WTC11 (cell line): ENCODE measurements at regions of chr1 and their contacts with region 1.

Region 1: DNA sequence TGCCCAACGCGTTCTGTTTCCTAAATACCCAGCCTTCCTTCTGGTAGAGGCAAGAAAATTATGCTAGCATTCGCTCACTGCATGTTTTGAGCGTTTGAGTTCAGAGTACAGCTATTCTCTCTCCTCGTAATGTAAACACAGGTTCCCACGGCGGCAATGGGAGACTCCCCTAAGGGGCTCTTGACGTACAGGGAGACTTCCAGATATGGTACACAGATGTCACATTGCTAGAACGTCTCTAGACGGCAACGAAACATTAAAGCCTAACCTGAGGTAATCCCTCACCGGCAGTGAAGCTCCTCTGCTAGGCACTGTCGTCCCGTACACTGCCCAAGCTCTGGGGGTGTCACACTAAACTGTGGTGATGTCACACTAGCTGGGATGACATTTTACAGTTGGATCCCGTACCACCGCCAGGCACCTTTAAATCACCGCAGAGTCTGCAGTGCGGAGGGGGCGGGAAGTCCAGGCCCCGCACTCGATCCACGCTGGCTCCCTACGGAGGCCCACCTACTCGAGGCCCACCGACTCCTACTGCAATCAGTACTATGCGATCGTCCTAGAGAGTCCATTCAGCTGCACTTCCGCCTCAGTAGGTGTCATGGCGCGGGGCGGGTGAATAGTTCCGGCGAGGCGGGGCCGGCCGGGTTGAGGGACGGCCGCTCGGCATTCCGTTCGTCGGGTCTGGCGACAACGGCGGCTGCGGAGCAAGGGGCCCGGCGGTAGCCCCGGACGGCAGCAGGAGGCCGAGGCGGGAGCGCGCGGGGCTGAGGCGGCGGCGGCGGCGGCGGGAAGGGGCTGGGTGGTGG is at the start of gene HIPK1:
- DNase-seq: peak; percentile 94
- ATAC-seq: peak; percentile 86
- H3K4me3 Mint-ChIP-seq: peak within 1 kb of the TSS; percentile 93
- H3K27ac Mint-ChIP-seq: peak within 1 kb of the TSS; percentile 84
- H3K4me1 Mint-ChIP-seq: peaks cover 36% of the 10 kb centered on the region
- H3K27me3 Mint-ChIP-seq: peaks cover 18% of the 10 kb centered on the region
- CTCF ChIP-seq: no peak
- total RNA-seq, gene HIPK1: 52.2 to 56.9 TPM (median 53.9 TPM) in 3 replicates

Region 2: GRCh38 chr1:113887402-113888175 is 41.6 kb before region 1 on chr1 and contains the start of gene BCL2L15:
- CTCF ChIA-PET with region 1: no interaction called
- POLR2A ChIA-PET with region 1: no interaction called
- DNase-seq: no peak
- ATAC-seq: no peak
- H3K4me3 Mint-ChIP-seq: no peak within 1 kb of the TSS
- H3K27ac Mint-ChIP-seq: no peak within 1 kb of the TSS
- H3K4me1 Mint-ChIP-seq: no peaks in the 10 kb centered on the region
- H3K27me3 Mint-ChIP-seq: peaks cover 4% of the 10 kb centered on the region
- CTCF ChIP-seq: no peak
- total RNA-seq, gene BCL2L15: 0.17 to 0.30 TPM (median 0.18 TPM) in 3 replicates

Region 3: GRCh38 chr1:113904674-113905434 is 24.3 kb before region 1 on chr1 and contains the starts of genes AP4B1 and DCLRE1B:
- CTCF ChIA-PET with region 1: interaction called, 19 read pairs
- POLR2A ChIA-PET with region 1: interaction called, 23 read pairs
- DNase-seq: peak; percentile 98
- ATAC-seq: peak; percentile 97
- H3K4me3 Mint-ChIP-seq: peak within 1 kb of the TSS; percentile 95
- H3K27ac Mint-ChIP-seq: peak within 1 kb of the TSS; percentile 94
- H3K4me1 Mint-ChIP-seq: peaks cover 7% of the 10 kb centered on the region
- H3K27me3 Mint-ChIP-seq: no peaks in the 10 kb centered on the region
- CTCF ChIP-seq: no peak
- total RNA-seq, gene AP4B1: 10.6 to 14.2 TPM (median 13.6 TPM) in 3 replicates
- total RNA-seq, gene DCLRE1B: 9.4 to 11.1 TPM (median 9.5 TPM) in 3 replicates